Activated CD8-positive, alpha-beta memory T cell treated with anti-CD3 and anti-CD28 coated beads, Interleukin-2, amount 10 ng/mL, durations not matched to agents 7 days and 5 days (primary cell): ENCODE measurements at regions of chr16 and their contacts with region 1.

Region 1: DNA sequence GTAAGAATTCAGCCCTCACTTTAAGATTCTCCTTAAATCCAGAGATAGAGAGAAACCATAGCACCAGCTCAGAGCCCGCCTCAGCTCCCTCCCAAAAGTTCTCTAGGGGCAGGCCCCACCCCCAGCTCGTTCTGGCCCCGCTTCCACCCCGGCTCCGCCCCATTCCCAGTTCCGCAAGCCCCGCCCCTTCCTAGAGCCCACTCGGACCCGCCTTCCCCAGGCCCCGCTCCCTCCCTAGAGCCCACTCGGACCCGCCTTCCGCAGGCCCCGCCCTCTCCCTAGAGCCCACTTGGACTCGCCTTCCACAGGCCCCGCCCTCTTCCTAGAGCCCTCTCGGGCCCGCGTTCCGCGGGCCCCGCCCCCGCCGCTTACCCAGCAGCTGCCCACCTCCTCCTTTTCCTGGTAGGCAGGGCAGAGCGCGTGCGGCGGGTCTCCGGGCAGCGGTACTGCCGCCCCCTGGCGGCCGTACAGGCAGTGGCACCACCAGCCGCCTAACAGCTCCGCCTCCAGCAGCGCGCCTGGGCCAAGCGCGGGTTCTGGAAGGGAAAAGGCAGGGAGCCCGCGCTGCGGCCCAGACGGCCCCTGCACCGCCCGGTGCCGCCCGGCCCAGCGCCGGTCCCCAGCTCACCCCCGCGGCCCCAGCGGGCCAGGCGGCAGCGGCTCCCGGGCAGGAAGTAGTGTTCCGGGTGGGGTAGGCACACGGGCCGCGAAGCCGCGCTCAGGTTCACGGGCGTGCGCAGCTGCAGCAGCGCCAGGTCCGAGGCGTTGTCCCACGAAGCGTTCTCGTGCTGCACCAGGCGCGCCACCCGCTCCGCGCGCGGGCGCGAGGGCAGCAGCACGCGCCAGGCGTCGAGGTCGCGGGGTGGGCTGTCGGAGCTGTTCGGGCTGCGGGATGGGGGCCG is 6.8 kb upstream of the PRSS8 start:
- DNase-seq: peak; percentile 100
- ATAC-seq: peak; percentile 94
- H3K4me3 Mint-ChIP-seq: peak overlapping the region; percentile 63
- H3K27ac Mint-ChIP-seq: peak overlapping the region; percentile 85
- H3K4me1 Mint-ChIP-seq: peaks cover 10% of the 10 kb centered on the region
- H3K27me3 Mint-ChIP-seq: peaks cover 3% of the 10 kb centered on the region

Region 2: GRCh38 chr16:30956601-30957455 is 185.5 kb before region 1 on chr16:
- CTCF ChIA-PET with region 1: interaction called, 20 read pairs
- DNase-seq: peak; percentile 92
- ATAC-seq: peak; percentile 76
- H3K4me3 Mint-ChIP-seq: peak overlapping the region; percentile 89
- H3K27ac Mint-ChIP-seq: peak overlapping the region; percentile 99
- H3K4me1 Mint-ChIP-seq: peaks cover 33% of the 10 kb centered on the region
- H3K27me3 Mint-ChIP-seq: no peaks in the 10 kb centered on the region

Region 3: DNA sequence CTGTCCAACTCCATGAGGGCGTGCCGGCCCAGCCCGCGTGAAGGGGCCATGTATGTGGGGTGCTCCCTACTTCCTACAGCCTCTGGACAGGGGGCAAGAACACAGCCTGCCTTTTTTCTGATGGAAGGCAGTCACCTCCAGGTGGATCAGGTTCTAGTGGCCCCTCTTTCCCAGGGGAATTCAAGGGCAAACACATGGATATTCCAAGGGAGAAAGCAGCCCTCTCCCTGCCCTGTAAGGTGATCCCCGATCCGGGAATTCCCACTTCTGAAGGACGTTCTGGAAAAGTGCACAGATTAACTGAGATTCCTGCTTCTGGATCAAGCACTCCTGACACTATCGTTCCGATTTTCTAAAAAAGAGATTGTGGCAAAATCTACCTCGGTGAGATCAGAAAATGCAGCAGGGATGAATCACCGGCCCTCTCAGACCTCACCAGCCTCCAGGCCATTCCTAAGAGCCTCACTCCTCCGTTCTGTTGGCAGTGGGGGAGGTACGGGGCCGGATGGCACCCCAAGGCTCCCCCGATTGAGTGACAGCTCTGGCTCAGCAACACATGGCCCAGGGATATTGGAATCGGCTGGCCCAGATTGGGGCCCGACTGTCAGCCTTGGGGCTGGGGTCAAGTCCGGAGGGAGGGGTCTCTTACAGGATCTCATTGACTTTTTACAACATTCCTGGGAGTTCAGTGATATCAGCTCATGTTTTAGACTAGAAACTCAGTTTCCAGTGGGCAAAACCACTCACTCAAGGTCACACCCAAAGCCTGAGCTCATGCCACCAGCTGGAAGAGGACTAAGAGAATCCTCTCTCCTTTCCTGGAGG is 144.3 kb before region 1 on chr16:
- CTCF ChIA-PET with region 1: interaction called, 10 read pairs
- DNase-seq: no peak
- ATAC-seq: no peak
- H3K4me3 Mint-ChIP-seq: peak overlapping the region; percentile 81
- H3K27ac Mint-ChIP-seq: no peak overlapping the region
- H3K4me1 Mint-ChIP-seq: peaks cover 26% of the 10 kb centered on the region
- H3K27me3 Mint-ChIP-seq: peaks cover 11% of the 10 kb centered on the region

Region 4: DNA sequence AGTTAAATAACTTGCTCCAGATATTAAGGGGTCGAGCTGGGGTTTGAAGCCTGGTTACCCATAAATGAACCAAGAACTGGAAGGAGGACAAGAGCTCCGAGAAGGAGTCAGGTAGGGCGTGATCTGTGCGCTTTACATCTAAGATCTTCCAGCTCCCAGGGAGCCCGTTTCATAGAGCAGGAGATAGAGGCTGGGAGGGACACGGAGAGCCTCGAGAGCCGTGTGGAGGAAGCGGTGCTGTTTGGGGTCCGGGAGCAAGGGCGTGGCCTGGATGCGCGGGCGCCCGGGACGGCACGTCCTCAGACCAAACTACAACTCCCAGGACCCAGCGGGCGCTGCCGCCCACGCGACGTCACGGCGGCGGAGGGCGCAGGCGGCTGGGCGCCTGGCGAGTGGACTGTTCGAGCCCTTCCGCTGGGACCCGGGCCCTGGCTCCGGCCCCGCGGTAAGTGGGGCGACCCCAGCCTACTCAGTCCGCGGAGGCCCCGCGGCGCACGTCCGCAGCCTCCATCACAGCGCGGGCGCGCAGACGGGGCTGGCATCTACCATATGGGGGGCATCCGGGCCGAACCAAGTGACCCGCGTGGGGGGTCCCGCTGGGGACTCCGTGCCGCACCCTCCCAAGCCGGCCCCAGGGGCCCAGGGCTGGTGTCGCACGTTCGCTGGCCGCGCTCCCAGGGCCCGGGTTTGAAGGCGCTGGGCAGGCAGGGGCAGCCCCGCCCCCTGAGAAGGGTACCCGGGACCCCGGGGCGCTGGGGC is 34.1 kb before region 1 on chr16 and contains the start of gene BCKDK:
- CTCF ChIA-PET with region 1: interaction called, 11 read pairs
- DNase-seq: peak; percentile 87
- ATAC-seq: peak; percentile 94
- H3K4me3 Mint-ChIP-seq: peak within 1 kb of the TSS; percentile 80
- H3K27ac Mint-ChIP-seq: peak within 1 kb of the TSS; percentile 86
- H3K4me1 Mint-ChIP-seq: peaks cover 22% of the 10 kb centered on the region
- H3K27me3 Mint-ChIP-seq: no peaks in the 10 kb centered on the region
- total RNA-seq, gene BCKDK: 34.7 to 35.4 TPM

Region 5: DNA sequence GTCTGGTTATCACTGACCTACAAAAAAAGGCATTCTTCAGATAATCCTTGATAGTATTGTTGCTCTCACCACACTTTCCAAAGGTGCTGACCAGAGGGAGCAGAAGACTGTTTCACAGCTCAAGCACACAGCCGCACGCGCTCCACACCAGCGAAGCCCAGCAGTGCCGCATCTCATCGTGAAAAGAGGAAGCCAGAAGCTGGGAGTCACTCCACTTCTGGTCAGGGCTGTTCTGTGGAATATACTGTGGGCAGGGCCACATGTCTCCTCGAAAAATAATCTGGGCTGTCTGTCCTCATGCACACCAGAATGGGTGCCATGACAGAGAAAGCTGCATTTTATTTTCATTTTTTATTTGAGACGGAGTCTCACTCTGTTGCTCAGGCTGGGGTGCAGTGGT is 14.8 kb after region 1 on chr16:
- CTCF ChIA-PET with region 1: interaction called, 27 read pairs
- DNase-seq: no peak
- ATAC-seq: peak; percentile 33
- H3K4me3 Mint-ChIP-seq: peak overlapping the region; percentile 36
- H3K27ac Mint-ChIP-seq: no peak overlapping the region
- H3K4me1 Mint-ChIP-seq: peaks cover 9% of the 10 kb centered on the region
- H3K27me3 Mint-ChIP-seq: peaks cover 10% of the 10 kb centered on the region

Region 6: DNA sequence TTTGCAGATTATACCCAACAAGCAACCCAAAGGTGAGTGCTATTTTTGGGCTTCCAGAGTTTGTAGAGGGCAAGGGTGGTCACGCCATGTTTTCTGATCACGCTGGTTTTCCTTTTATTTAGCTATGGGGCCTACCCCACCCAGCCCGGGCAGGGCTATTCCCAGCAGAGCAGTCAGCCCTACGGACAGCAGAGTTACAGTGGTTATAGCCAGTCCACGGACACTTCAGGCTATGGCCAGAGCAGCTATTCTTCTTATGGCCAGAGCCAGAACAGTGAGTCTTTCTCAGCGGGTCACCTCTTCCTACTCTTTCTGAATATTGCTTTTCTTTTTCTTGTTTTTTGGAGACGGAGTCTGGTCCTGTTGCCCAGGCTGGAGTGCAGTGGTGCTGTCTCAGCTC is 40.0 kb after region 1 on chr16:
- CTCF ChIA-PET with region 1: interaction called, 19 read pairs
- DNase-seq: no peak
- ATAC-seq: no peak
- H3K4me3 Mint-ChIP-seq: peak overlapping the region; percentile 91
- H3K27ac Mint-ChIP-seq: peak overlapping the region; percentile 96
- H3K4me1 Mint-ChIP-seq: peaks cover 69% of the 10 kb centered on the region
- H3K27me3 Mint-ChIP-seq: peaks cover 2% of the 10 kb centered on the region

Region 7: DNA sequence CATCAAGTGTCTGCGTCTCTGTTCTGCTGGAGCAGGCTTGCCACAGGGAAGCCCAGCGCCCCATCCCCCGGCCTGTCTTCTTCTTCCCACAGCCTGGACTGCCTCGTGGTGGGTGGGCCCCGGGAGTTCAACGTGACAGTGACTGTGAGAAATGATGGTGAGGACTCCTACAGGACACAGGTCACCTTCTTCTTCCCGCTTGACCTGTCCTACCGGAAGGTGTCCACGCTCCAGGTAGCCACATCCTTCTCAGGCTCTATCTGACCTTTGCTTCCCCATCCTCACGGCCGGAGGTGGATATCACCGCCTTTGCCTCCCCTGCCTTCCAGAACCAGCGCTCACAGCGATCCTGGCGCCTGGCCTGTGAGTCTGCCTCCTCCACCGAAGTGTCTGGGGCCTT is 182.8 kb after region 1 on chr16:
- CTCF ChIA-PET with region 1: no interaction called
- DNase-seq: no peak
- ATAC-seq: no peak
- H3K4me3 Mint-ChIP-seq: no peak overlapping the region
- H3K27ac Mint-ChIP-seq: no peak overlapping the region
- H3K4me1 Mint-ChIP-seq: peaks cover 6% of the 10 kb centered on the region
- H3K27me3 Mint-ChIP-seq: peaks cover 6% of the 10 kb centered on the region